Activated CD8-positive, alpha-beta memory T cell treated with anti-CD3 and anti-CD28 coated beads, Interleukin-2, amount 10 ng/mL, durations not matched to agents 7 days and 5 days (primary cell): ENCODE measurements at regions of chr17 and their contacts with region 1.

Region 1: DNA sequence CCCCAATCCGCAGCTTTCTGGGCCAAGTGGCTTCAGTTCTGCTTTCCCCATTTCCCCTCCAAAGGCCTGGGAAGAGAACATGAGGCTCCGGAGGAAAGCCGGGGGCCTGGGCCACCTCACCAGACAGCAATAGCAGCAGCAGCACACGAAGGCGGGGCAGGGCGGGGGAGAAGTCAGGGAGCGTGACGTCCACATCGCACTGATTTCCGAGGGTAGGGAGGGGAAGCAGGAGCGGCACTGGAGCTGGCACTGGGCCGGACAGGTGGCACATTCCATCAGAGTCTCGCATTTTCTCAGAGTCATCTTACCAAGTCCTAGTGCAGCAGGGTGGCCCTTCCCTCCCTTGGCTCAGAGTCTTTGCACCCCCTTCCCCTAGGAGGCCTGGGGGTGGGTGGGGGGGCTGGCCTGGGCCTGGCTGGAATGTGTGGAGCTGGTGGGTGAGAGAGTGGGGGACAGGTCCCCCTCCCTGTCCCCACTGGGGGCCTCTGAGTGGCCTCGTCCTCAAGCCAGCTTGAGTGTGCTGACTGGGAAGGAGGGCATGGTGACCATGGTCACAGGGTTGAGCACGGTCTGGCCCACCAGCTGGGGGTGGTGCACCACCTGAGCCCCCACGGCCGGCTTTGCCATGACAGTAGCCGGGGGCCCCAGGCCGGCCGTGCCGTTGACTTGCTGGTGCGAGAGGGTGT is 14.3 kb downstream of the MNT start:
- DNase-seq: no peak
- ATAC-seq: no peak
- H3K4me3 Mint-ChIP-seq: no peak overlapping the region
- H3K27ac Mint-ChIP-seq: no peak overlapping the region
- H3K4me1 Mint-ChIP-seq: peaks cover 31% of the 10 kb centered on the region
- H3K27me3 Mint-ChIP-seq: no peaks in the 10 kb centered on the region

Region 2: DNA sequence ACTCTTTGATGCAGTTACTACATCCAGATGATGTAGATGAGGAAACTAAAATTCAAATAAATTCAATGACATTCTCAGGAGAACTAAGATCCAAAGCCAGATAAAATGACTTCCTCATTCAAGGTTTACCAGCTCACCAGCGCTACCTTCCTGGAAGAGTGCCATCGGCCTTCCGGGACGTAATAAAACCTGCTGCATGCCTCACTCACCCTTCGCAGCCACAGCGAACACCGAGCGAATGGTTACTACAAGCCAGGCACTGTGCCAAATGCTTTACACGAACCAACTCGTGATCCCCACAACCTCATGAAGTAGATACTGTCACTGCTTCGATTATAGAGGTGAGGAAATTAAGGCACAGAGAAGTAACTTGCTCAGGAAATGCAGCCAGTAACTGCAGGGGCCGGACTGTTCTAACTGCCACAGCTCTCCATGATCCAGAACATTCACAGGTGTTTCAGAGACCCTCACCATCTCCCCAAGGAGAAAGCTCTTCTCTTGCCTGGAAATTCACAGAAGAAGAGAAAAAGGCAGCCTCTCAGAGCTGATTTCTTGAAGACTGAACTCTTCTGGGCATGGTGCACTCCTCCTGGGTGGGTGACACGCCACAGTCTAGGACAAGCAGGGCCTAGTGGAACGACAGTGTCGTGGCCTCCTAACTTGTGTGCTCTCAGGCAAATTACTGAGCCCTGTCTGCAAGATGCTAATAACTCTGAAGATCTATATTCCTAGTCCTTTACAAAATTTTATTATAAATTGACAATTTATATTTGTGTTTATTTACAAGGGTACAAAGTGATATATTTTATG is 284.9 kb before region 1 on chr17:
- CTCF ChIA-PET with region 1: no interaction called
- DNase-seq: no peak
- ATAC-seq: peak; percentile 27
- H3K4me3 Mint-ChIP-seq: no peak overlapping the region
- H3K27ac Mint-ChIP-seq: peak overlapping the region; percentile 45
- H3K4me1 Mint-ChIP-seq: peaks cover 34% of the 10 kb centered on the region
- H3K27me3 Mint-ChIP-seq: no peaks in the 10 kb centered on the region

Region 3: GRCh38 chr17:2354311-2354710 is 32.2 kb before region 1 on chr17:
- CTCF ChIA-PET with region 1: interaction called, 15 read pairs
- DNase-seq: no peak
- ATAC-seq: no peak
- H3K4me3 Mint-ChIP-seq: peak overlapping the region; percentile 14
- H3K27ac Mint-ChIP-seq: peak overlapping the region; percentile 85
- H3K4me1 Mint-ChIP-seq: peaks cover 15% of the 10 kb centered on the region
- H3K27me3 Mint-ChIP-seq: no peaks in the 10 kb centered on the region

Region 4: DNA sequence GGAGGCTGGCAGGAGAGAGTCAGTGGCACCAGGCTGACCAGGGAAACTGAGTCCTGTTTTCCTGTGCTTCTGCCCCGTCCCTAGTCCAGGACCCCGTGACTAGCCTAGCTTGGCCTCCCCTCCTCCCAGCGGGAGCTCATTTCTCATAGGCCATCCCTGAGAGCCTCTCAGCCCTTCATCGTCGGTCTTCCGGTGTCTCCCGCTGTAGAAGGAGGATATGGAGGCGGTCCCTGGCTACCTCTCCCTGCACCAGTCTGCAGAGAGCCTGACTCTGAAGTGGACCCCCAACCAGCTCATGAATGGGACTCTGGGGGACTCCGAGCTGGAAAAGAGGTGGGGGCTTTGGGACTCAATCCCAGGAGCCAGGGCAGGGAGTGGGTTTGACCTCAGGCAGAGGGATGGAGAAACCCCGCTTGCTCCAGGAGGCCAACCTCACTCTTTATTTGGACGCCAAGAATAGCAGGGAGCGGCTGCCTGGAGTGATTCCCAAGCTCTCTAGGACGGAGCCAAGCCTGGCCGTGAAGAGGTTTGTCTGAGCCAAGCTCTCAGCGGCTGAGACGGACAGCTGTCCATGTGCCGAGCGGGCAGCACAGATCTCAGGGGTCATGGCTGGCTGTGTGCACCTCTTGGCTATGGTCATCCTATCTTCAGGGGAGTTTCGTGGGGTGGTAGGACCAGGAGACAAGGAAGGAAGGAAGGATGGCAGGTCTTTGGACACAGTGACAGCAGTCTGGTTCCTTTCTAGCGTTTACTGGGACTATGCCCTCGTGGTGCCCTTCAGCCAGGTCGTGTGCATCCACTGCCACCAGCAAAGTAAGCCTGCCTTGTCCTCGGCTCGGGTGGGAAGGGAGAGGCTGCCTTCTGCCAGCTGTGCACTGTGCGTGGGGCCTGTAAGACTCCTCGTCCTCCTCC is 22.4 kb before region 1 on chr17:
- CTCF ChIA-PET with region 1: interaction called, 15 read pairs
- DNase-seq: no peak
- ATAC-seq: no peak
- H3K4me3 Mint-ChIP-seq: no peak overlapping the region
- H3K27ac Mint-ChIP-seq: no peak overlapping the region
- H3K4me1 Mint-ChIP-seq: no peaks in the 10 kb centered on the region
- H3K27me3 Mint-ChIP-seq: no peaks in the 10 kb centered on the region

Region 5: DNA sequence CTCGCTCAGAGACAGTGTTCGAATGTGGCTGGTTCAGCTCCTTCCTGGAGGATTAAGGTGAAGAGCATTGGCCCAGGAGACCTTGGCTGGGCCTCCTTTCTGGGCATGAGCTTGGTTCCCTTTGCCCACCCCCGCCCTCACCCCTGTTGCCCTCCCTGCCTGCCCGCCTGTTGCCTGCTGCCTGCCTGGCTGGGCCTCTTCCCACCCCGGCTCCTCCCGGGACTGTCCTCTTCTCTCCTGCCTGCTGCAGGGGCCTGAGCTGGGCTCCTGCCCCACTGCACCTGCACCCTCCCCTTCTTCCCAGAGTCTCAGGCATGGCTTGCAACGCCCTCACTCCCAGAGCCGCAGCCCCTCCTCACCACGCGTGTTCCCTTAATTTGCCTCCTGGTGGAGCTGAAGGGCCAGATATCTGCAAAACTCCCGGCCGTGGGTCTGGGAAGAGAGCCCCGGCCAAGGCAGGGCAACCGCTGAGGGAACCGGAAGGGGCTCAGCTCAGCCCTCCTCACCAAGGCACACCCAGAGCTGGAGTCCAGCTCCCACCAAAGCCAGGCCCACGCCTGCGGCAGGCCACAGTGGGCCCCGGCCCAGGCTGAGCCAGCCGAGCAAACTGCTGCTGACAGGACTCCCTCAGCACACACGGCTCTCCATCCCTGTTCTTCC is 16.9 kb before region 1 on chr17:
- CTCF ChIA-PET with region 1: interaction called, 15 read pairs
- DNase-seq: no peak
- ATAC-seq: no peak
- H3K4me3 Mint-ChIP-seq: no peak overlapping the region
- H3K27ac Mint-ChIP-seq: no peak overlapping the region
- H3K4me1 Mint-ChIP-seq: no peaks in the 10 kb centered on the region
- H3K27me3 Mint-ChIP-seq: no peaks in the 10 kb centered on the region

Region 6: DNA sequence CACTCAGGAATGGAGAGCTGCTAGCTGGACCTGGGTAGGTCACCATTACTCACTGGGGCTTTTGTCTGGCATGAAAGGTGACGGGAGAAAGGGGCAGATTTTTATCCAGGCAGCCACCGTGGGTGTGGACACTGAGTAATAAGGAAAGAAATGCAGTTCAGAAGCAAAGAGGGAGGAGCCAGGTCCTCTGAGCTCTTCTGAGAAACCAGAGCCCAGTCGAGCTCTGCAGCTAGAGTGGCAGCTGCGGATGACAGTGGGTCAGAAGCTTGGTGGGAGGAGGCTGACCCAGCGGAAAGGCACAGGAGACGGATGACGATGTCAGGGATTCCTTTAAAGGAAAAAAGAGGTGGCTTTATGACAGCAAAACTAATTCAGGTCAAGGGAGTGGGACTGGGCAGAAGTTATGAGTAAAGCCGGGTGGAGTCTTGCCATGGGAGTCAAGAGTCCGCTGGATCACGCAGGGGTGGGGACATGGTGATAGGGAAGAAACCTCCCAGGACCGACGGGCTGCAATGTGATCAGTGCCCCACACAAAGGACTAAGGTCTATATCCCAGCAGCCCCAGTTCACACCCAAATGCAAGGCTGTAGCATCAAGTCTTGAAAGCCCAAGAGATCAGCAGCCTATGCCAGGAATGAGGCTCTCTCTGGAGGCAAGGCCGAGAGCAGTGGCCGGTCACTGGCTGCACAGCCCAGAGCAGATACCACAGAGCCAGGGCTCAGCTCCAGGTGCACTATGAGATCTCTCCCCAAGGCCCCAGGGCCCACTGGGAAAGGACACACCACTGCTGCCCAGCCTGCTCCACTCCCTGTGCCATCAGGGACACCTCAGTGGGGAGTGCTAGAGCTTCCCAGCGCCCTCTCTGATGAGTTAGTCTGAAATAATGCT is 20.6 kb after region 1 on chr17:
- CTCF ChIA-PET with region 1: interaction called, 94 read pairs
- DNase-seq: no peak
- ATAC-seq: no peak
- H3K4me3 Mint-ChIP-seq: no peak overlapping the region
- H3K27ac Mint-ChIP-seq: peak overlapping the region; percentile 40
- H3K4me1 Mint-ChIP-seq: peaks cover 26% of the 10 kb centered on the region
- H3K27me3 Mint-ChIP-seq: no peaks in the 10 kb centered on the region

Region 7: GRCh38 chr17:2532146-2532720 is 145.7 kb after region 1 on chr17:
- CTCF ChIA-PET with region 1: no interaction called
- DNase-seq: no peak
- ATAC-seq: no peak
- H3K4me3 Mint-ChIP-seq: no peak overlapping the region
- H3K27ac Mint-ChIP-seq: no peak overlapping the region
- H3K4me1 Mint-ChIP-seq: peaks cover 10% of the 10 kb centered on the region
- H3K27me3 Mint-ChIP-seq: no peaks in the 10 kb centered on the region

Region 8: GRCh38 chr17:2680961-2681360 is 294.4 kb after region 1 on chr17:
- CTCF ChIA-PET with region 1: interaction called, 14 read pairs
- DNase-seq: no peak
- ATAC-seq: no peak
- H3K4me3 Mint-ChIP-seq: no peak overlapping the region
- H3K27ac Mint-ChIP-seq: no peak overlapping the region
- H3K4me1 Mint-ChIP-seq: peaks cover 2% of the 10 kb centered on the region
- H3K27me3 Mint-ChIP-seq: no peaks in the 10 kb centered on the region